ENCODE measurements at regions of chr2 and their contacts with region 1.

Region 1: GRCh38 chr2:42928692-42929545 is 136.5 kb upstream of the HAAO start:
- DNase-seq: no peak
- ATAC-seq: no peak
- H3K4me3 ChIP-seq: no peak overlapping the region
- H3K27ac ChIP-seq: peak overlapping the region; percentile 67 to 81 (median 74)
- H3K4me1 ChIP-seq: peaks cover 59 to 65% of the 10 kb centered on the region in 2 donors
- H3K27me3 ChIP-seq: no peaks in the 10 kb centered on the region
- CTCF ChIP-seq: peak in 2 of 5 experiments; percentile 12 to 34
- POLR2A ChIP-seq: no peak

Region 2: DNA sequence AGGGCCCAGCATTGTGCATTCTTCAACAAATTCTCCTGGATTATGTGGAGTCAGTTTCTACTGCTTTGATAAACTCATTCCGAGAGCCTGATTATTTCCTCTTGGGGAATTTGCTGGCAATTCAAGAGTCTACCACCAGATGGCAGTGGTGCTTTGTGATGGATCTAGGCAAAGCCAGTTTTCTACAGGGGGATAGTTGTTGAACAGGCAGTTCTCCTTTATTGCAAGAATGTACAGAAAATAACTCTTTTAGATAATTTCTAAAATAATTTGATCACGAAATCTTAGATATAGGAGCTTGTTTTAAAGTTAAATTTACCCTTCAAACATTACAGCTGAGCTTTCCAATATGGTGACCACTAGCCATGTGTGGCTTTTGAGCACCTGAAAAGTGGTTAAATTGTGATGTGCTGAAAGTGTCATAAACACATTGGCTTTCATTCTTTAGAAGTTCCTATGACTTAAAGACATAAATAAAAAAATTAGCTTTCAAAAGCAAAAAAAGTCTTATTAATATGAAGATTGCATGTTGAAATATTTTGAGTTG is 69.8 kb before region 1 on chr2:
- in situ Hi-C with region 1: no loop called
- intact Hi-C with region 1: loop called (anchors 5 kb)
- DNase-seq: no peak
- ATAC-seq: no peak
- H3K4me3 ChIP-seq: no peak overlapping the region
- H3K27ac ChIP-seq: no peak overlapping the region
- H3K4me1 ChIP-seq: peaks cover 3% of the 10 kb centered on the region in 2 donors
- H3K27me3 ChIP-seq: no peaks in the 10 kb centered on the region
- CTCF ChIP-seq: peak; percentile 59 to 81 (median 76)
- POLR2A ChIP-seq: no peak

Region 3: DNA sequence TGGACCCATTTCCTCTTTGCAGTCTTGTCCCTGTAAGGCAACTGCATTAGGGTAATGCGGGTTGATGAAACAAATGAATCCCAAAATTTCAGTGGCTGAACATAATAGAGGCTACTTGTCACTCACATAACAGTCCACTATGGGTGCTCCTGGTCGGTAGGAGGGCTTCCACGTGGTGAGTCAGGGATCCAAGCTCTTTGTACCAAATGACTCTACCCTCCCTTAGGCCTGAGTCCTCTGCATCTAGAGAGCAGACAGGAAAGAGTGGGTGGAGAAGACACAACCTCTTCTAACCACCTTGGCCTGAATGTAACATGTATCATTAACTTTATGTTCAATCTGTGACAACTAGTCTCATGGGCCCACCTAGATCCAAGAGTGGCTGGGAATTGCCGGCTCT is 50.3 kb before region 1 on chr2:
- in situ Hi-C with region 1: no loop called
- intact Hi-C with region 1: loop called (anchors 5 kb)
- DNase-seq: no peak
- ATAC-seq: no peak
- H3K4me3 ChIP-seq: no peak overlapping the region
- H3K27ac ChIP-seq: peak overlapping the region; percentile 38 to 79 (median 41)
- H3K4me1 ChIP-seq: peaks cover 17 to 61% of the 10 kb centered on the region in 2 donors
- H3K27me3 ChIP-seq: no peaks in the 10 kb centered on the region
- CTCF ChIP-seq: no peak
- POLR2A ChIP-seq: no peak

Region 4: DNA sequence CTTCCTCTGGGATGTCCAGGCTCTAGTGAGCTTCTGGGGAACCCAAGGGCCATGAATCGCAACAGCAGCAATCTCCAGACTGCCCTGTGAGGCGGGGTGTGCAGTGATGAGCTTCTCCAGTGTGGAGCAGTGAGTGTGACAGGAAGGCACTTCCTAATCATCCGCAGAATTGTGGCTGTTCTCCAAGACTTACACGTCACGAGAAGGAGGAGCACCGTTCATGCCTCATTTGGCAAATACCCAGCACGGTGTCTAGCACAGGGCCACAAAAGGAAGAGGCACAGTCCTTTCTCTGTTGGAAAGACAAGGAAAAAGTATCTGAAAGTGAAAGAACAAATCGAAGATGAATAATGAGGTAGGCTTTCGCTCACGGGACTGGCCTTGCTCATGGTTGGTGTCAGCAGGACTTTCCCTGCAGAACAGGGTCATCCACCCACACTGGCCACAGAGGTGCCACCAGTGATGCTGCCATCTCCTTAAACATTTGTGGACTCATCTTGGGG is 11.4 kb before region 1 on chr2:
- in situ Hi-C with region 1: no loop called
- intact Hi-C with region 1: no loop called
- DNase-seq: peak in 1 of 2 donors; percentile 46
- ATAC-seq: peak; percentile 60 to 65
- H3K4me3 ChIP-seq: no peak overlapping the region
- H3K27ac ChIP-seq: peak overlapping the region in 1 of 4 donors; percentile 50
- H3K4me1 ChIP-seq: peaks cover under 1 to 8% of the 10 kb centered on the region in 2 donors
- H3K27me3 ChIP-seq: no peaks in the 10 kb centered on the region
- CTCF ChIP-seq: no peak
- POLR2A ChIP-seq: no peak

Measured in gastrocnemius medialis (tissue), 4 donors.